Astrocyte of the spinal cord (primary cell): ENCODE measurements at regions of chr1 and their contacts with region 1.

Region 1: GRCh38 chr1:64136752-64137411 is 66.5 kb upstream of the UBE2U start:
- DNase-seq: peak; percentile 96
- H3K4me3 ChIP-seq: no peak overlapping the region
- CTCF ChIP-seq: peak; percentile 92

Region 2: DNA sequence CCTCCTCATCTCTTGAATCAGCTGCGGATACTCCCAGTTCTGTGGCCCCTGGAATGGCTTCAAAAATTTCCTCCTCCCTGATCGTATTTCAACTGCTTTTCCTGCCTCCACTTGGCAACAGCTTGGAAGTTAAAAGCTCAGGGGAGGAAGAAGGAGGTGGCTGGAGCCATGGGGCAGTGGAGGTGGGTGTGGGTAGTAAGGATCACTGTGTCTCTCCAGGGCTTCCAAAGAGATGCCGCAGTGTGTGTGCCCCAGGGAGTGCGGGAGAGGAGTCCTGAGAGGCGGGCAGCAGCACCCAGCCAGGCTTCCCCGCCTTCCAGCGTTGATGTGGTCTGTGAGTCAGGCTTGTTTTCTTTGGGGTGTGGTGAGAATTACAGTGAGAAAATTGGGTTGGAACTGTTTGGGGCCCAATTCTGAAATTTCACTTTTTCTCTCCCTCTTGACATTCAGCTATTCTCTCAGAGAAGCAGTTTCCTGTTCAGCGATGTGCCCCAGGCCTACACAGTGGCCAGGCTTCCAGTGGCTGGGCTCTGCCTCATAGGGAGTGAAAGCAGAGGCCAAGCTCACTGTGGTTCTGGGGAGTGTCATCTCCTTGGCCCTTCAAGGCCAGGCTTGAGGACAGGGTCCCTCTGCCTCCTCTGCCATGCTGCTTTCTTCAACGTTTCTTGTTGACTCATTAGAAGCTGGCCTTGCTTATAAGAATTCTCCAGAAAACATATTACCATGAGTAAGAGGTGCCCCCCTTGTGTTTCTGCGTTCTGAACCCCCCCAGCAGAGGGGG is 474.6 kb before region 1 on chr1:
- in situ Hi-C with region 1: no loop called
- DNase-seq: peak; percentile 88
- H3K4me3 ChIP-seq: no peak overlapping the region
- CTCF ChIP-seq: no peak

Region 3: DNA sequence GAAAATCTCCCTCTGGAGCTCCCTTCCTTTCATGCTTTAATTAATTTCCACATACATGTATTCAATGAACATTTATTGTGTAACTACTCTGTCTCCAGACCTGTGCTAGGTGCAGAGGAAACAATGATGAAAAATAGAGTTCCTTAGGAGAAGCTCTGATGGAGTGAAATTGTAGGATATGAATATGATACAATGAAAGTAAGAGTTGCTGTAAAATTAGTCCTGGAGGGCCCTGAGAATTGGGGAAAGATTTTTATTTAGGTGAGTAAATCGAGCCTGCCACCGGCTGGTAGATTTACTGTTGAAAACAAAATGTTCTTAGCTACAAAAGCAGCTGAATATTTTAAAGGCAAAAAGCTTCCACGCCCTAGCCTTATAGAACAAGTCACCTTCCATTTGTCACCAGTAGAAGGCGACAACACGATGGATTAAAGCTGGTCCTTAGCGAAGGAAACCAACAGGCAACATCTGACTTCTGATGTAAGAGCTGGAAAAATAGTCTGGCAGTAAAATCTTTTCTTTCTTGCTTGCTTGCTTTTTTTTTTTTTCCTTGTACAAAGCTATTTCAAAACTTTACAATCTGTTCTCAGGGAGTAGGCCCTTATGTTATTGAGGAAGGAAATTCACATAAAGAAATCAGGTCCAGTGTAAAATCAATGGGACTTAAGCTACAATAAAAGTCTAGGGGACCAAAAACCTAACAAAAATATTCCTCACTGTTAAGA is 445.0 kb before region 1 on chr1:
- in situ Hi-C with region 1: loop called (anchors 25 kb)
- DNase-seq: peak; percentile 92
- H3K4me3 ChIP-seq: no peak overlapping the region
- CTCF ChIP-seq: peak; percentile 74

Region 4: DNA sequence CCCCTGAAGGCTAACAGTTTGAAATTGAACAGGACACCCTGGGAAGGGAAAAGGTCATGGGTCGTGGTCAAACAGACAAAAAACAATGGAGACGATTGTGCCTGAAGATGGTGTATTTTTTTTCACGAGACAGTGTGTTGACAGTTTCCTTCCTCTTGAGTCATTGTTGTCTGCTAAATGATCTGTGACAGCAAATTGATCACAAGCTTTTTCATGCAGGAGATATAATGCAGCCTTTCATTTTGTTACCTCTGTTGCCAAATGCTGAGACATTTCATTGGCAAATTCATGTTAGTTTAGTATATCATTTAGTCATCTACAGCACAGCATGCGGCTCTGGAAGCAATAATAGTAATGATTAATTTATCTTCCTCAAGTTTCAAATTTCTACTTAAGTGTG is 94.3 kb after region 1 on chr1:
- in situ Hi-C with region 1: no loop called
- DNase-seq: no peak
- H3K4me3 ChIP-seq: no peak overlapping the region
- CTCF ChIP-seq: no peak